SK-N-SH (cell line): ENCODE measurements at regions of chr2 and their contacts with region 1.

Region 1: GRCh38 chr2:234544659-234545611 is 48.1 kb upstream of the ARL4C start:
- DNase-seq: peak; percentile 86
- H3K4me3 ChIP-seq: peak overlapping the region in 1 of 2 experiments; percentile 28; a peak in 1 of 4 replicates
- H3K27ac ChIP-seq: no peak overlapping the region
- H3K4me1 ChIP-seq: no peaks in the 10 kb centered on the region; a peak in 1 of 4 replicates
- H3K27me3 ChIP-seq: no peaks in the 10 kb centered on the region
- CTCF ChIP-seq: peak; percentile 88
- EP300 ChIP-seq: no peak
- RAD21 ChIP-seq: peak; percentile 83

Region 2: GRCh38 chr2:233974530-233975071 is 570.3 kb before region 1 on chr2:
- CTCF ChIA-PET with region 1: interaction called, 12 read pairs
- POLR2A ChIA-PET with region 1: no interaction called
- DNase-seq: peak; percentile 32
- H3K4me3 ChIP-seq: no peak overlapping the region
- H3K27ac ChIP-seq: peak overlapping the region; percentile 7 to 77; a peak in 3 of 4 replicates
- H3K4me1 ChIP-seq: peaks cover 3 to 20% of the 10 kb centered on the region in 2 experiments; a peak in 3 of 4 replicates
- H3K27me3 ChIP-seq: no peaks in the 10 kb centered on the region
- CTCF ChIP-seq: no peak
- EP300 ChIP-seq: peak in 1 of 2 experiments; percentile 100
- RAD21 ChIP-seq: no peak

Region 3: DNA sequence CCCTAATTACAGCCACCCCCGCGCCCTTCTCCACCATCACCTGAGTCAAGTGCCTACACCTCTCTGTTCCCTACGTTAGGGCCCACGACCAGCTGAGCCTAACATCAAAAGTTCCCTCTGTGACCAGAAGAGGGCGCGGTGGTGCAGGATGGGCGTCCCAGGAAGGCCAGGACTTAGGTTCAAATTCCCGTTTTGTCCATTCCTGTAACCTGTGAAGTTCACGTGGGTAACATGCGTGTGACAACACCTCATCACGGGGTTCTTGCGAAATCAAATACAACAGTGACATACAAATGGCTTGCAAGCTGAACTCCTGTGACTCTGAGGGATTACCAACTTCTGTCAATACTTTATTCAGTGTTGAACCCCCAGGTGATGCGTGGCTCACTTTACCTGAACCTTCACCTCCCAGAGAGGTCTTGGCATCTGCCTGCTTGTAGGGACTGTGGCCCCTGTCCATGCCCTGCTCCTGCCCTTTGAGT is 255.9 kb before region 1 on chr2:
- CTCF ChIA-PET with region 1: interaction called, 15 read pairs
- POLR2A ChIA-PET with region 1: no interaction called
- DNase-seq: peak; percentile 67
- H3K4me3 ChIP-seq: no peak overlapping the region; a peak in 1 of 4 replicates
- H3K27ac ChIP-seq: no peak overlapping the region
- H3K4me1 ChIP-seq: peaks cover 13 to 21% of the 10 kb centered on the region in 2 experiments; a peak in 2 of 4 replicates
- H3K27me3 ChIP-seq: no peaks in the 10 kb centered on the region
- CTCF ChIP-seq: peak; percentile 65
- EP300 ChIP-seq: no peak
- RAD21 ChIP-seq: peak; percentile 85

Region 4: DNA sequence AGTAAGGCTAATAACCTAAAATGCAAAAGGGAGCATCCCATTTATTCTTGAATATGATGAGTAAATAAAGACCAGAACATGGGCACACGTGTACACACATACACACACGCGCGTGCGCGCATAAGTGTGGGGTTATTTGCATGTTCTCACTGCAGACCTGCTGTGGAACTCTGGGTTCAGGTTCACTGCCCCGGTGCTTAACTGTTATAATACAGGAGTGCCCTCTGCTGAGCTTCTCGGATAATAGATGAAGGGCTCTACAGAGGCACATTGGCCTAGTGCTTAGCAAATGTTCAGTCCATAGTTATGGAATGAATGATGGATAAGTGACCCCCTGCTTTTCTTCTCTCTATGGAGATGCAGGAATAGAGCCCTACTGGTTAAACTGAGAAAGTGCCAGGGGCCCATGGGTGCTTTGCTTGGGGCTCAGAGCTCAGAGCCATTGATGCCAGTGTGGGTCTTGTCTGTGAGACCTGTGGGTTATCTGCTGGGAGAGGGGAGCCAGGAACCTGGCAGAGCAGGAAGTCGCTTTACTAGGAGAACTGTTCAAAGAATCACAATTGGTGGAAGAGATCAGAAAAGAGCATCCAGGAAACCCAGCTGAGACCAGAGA is 44.4 kb before region 1 on chr2:
- CTCF ChIA-PET with region 1: interaction called, 31 read pairs
- POLR2A ChIA-PET with region 1: interaction called, 3 read pairs
- DNase-seq: peak; percentile 61
- H3K4me3 ChIP-seq: no peak overlapping the region
- H3K27ac ChIP-seq: no peak overlapping the region
- H3K4me1 ChIP-seq: peaks cover 6 to 8% of the 10 kb centered on the region in 2 experiments; a peak in 2 of 4 replicates
- H3K27me3 ChIP-seq: no peaks in the 10 kb centered on the region
- CTCF ChIP-seq: peak; percentile 64
- EP300 ChIP-seq: no peak
- RAD21 ChIP-seq: peak; percentile 93

Region 5: DNA sequence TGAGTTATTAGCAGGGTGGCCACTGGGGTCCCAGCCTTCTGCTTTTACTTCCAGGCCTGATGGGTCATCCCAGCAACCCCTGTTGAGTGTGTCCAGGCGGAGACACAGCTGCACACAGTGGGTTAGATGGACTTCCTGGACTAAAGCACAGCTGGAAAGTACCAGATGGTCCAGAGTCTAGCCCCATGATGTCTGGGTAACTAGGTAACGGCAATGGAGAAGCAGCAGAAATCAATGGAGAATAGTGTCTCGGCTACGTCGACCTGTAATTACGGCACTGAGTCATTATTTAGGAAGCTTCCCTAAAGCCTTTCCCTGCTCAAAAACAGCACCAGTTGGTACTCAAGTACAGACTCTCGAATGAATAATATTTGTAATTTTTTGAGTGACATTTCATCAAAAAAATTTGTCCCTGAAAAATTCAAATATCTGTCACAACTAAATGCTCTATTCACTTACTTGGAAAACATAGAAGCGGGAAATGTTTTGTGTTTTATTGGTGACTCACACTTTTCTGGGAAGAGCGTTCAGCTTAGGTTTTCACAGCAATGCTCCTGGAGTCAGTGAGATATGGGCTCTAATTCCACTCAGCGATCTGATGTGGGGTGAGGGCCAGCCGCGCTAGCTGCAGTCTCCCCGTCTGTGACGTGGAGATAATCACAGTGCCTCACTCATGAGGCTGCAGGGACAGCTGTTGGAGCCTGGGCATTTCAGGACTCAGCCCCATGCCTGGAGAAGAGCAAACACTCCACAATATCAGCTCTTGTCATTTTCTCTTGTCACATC is 31.9 kb before region 1 on chr2:
- CTCF ChIA-PET with region 1: interaction called, 11 read pairs
- POLR2A ChIA-PET with region 1: no interaction called
- DNase-seq: peak; percentile 64
- H3K4me3 ChIP-seq: no peak overlapping the region
- H3K27ac ChIP-seq: peak overlapping the region in 1 of 2 experiments; percentile 41; a peak in 2 of 4 replicates
- H3K4me1 ChIP-seq: peaks cover 0 to 6% of the 10 kb centered on the region in 2 experiments; a peak in 1 of 4 replicates
- H3K27me3 ChIP-seq: no peaks in the 10 kb centered on the region
- CTCF ChIP-seq: no peak
- EP300 ChIP-seq: no peak
- RAD21 ChIP-seq: no peak

Region 6: GRCh38 chr2:234533626-234534025 is 11.3 kb before region 1 on chr2:
- CTCF ChIA-PET with region 1: interaction called, 22 read pairs
- POLR2A ChIA-PET with region 1: no interaction called
- DNase-seq: peak; percentile 63
- H3K4me3 ChIP-seq: no peak overlapping the region
- H3K27ac ChIP-seq: no peak overlapping the region; a peak in 1 of 4 replicates
- H3K4me1 ChIP-seq: peaks cover 0 to 36% of the 10 kb centered on the region in 2 experiments; a peak in 1 of 4 replicates
- H3K27me3 ChIP-seq: no peaks in the 10 kb centered on the region
- CTCF ChIP-seq: no peak
- EP300 ChIP-seq: no peak
- RAD21 ChIP-seq: no peak

Region 7: GRCh38 chr2:234555720-234556119 is 10.8 kb after region 1 on chr2:
- CTCF ChIA-PET with region 1: interaction called, 13 read pairs
- POLR2A ChIA-PET with region 1: no interaction called
- DNase-seq: peak; percentile 33
- H3K4me3 ChIP-seq: no peak overlapping the region
- H3K27ac ChIP-seq: no peak overlapping the region
- H3K4me1 ChIP-seq: peaks cover 0 to 6% of the 10 kb centered on the region in 2 experiments; a peak in 1 of 4 replicates
- H3K27me3 ChIP-seq: no peaks in the 10 kb centered on the region
- CTCF ChIP-seq: no peak
- EP300 ChIP-seq: no peak
- RAD21 ChIP-seq: no peak